ENCODE measurements at regions of chr7 and their contacts with region 1.

Region 1: DNA sequence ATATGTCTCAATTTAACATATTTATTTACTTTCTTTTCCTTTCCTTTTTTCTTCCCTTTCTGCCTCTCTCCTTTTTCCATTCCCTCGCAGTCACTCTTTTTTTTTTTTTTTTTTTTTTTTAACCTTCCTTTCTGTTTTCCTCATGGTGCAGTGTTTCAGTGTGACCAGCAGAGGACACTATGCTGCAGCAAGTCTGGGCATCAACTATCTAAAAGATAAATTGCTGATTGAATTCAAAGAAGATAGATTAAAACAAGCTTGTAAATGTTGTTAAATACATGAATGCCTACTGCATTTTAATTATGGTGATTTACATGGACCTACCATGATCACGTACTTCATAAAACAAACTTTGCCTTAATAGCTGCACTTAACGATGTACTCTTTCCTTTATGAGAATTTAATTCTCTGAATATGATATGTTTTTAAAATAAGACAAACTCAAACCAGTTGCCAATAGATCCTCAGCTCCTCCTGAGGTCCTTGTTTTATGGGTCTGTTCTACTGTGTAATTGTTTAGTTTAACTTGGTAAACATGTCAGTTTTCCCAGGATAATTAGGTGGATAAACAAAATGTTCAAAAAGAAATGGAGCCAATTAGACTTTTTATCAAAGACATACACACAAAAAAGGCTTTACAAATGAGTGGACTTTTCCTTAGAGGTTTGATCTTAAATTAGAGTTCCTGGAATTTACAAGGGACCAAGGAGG is 101.0 kb upstream of the AGR3 start:
- DNase-seq: no peak

Region 2: GRCh38 chr7:17304926-17305325 is 322.1 kb after region 1 on chr7:
- intact Hi-C with region 1: loop called (anchors 5 kb)
- DNase-seq: no peak

Region 3: DNA sequence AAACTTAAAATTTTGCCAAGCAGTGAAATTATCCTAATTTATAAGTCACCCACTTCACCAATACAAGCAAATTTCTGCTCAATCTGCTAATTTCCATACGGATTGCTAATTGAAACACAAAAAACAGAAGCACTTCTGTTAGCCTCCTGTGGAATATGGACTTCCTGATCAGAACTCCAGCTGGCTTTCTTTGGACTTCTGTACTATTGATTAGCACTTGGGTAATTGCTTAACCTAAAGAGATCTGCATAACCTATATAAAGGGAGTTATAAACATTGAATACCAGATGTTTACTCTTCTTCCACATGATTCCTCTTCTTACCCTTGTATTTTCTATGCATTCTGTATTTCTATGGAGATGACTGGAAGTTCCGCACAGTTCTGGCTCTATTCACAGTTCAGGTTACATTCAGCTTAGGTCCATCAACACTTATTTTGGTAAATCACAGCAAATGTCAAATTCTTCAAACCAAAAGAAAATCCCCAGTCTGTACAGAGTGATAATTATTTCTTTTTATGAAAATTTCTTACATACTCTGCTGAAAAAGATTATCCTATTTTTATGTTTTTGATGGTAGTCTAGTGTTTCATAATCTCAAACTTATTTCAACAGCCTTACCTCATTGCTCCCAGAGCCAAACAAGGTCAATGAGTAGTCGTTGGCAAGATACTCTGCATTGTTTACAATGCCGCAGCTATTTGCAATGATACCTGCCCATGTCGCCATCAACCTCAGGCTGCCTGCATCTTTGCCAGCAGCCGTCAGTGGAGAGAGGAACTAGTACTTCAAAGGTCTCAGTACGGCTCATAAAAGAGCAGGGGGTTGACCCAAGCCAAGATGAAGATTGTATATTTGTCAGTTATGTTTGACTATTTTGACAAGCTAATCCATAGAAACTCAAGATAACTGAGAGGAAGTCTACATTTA is 541.3 kb after region 1 on chr7:
- intact Hi-C with region 1: loop called (anchors 10 kb)
- DNase-seq: no peak

Region 4: DNA sequence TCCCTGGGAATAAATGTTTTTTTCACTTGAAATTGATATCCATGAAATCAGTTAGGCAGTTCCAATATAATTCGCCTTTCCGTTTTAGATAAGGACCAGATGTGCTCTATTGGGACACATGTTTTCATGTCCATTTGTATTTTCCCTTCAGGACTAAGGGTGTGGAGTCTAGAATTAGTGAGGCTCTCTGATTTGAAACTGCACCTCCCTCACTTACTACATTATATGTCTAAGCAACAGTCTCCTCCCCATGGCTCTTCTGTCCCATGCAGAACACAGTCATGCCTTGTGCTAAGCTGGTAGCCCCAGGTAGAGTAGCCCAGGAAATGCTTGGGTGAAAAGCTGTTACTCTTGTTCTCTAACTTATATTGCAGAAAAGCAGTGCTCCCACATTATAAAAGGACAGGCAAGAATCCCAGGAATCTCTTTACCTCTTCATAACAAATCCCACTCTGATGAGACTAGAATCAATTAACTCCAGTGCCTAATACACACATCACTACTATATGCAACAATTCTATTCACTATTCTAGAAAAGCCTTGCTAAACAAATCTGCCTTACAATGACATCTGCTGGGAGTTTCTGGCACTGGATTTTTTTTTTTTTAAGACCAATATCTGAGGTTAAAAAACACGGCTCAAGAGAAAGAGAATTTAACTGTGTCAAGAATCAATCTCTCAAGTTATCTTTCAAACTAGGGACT is 663.6 kb after region 1 on chr7:
- intact Hi-C with region 1: loop called (anchors 5 kb)
- DNase-seq: no peak

Measured in cardiac septum (tissue), 1 donor.